ENCODE measurements at regions of chr9 and their contacts with region 1.

Region 1: GRCh38 chr9:131334629-131335367 is 45.3 kb downstream of the PLPP7 start:
- DNase-seq: no peak
- H3K4me3 ChIP-seq: no peak overlapping the region
- H3K27ac ChIP-seq: no peak overlapping the region
- H3K4me1 ChIP-seq: no peaks in the 10 kb centered on the region
- CTCF ChIP-seq: no peak

Region 2: DNA sequence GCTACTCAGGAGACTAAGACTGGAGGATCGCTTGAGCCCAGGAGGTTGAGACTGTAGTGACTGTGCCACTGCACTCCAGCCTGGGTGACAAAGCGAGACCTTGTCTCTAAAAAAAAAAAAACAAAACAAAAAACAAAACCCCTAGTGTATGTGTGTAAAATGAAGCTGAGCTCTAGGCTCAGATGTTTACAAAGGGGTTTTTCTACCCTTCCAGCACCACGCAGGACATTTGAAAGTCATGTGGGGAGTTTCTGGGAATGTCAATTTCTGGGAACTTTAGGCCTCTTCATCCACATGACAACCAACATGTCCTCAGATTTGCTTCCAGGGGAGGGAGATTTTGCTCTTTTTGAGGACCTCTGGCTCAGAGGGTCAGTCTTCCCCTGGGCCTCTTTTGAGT is 280.9 kb before region 1 on chr9:
- CTCF ChIA-PET with region 1: interaction called, 6 read pairs
- POLR2A ChIA-PET with region 1: no interaction called
- intact Hi-C with region 1: loop called (anchors 1 kb)
- DNase-seq: no peak
- H3K4me3 ChIP-seq: no peak overlapping the region
- H3K27ac ChIP-seq: no peak overlapping the region
- H3K4me1 ChIP-seq: no peaks in the 10 kb centered on the region
- CTCF ChIP-seq: no peak

Region 3: GRCh38 chr9:131178382-131178781 is 156.4 kb before region 1 on chr9:
- CTCF ChIA-PET with region 1: interaction called, 4 read pairs
- POLR2A ChIA-PET with region 1: no interaction called
- intact Hi-C with region 1: loop called (anchors 1 kb)
- DNase-seq: peak; percentile 80
- H3K4me3 ChIP-seq: no peak overlapping the region
- H3K27ac ChIP-seq: no peak overlapping the region
- H3K4me1 ChIP-seq: peaks cover 33% of the 10 kb centered on the region
- CTCF ChIP-seq: peak; percentile 96

Region 4: GRCh38 chr9:131191857-131192256 is 142.9 kb before region 1 on chr9:
- CTCF ChIA-PET with region 1: no interaction called
- POLR2A ChIA-PET with region 1: interaction called, 10 read pairs
- intact Hi-C with region 1: no loop called
- DNase-seq: no peak
- H3K4me3 ChIP-seq: no peak overlapping the region
- H3K27ac ChIP-seq: no peak overlapping the region
- H3K4me1 ChIP-seq: no peaks in the 10 kb centered on the region
- CTCF ChIP-seq: no peak

Region 5: GRCh38 chr9:131240047-131240921 is 94.5 kb before region 1 on chr9:
- CTCF ChIA-PET with region 1: no interaction called
- POLR2A ChIA-PET with region 1: no interaction called
- intact Hi-C with region 1: loop called (anchors 5 kb)
- DNase-seq: no peak
- H3K4me3 ChIP-seq: no peak overlapping the region
- H3K27ac ChIP-seq: no peak overlapping the region
- H3K4me1 ChIP-seq: peaks cover 9% of the 10 kb centered on the region
- CTCF ChIP-seq: no peak

Region 6: DNA sequence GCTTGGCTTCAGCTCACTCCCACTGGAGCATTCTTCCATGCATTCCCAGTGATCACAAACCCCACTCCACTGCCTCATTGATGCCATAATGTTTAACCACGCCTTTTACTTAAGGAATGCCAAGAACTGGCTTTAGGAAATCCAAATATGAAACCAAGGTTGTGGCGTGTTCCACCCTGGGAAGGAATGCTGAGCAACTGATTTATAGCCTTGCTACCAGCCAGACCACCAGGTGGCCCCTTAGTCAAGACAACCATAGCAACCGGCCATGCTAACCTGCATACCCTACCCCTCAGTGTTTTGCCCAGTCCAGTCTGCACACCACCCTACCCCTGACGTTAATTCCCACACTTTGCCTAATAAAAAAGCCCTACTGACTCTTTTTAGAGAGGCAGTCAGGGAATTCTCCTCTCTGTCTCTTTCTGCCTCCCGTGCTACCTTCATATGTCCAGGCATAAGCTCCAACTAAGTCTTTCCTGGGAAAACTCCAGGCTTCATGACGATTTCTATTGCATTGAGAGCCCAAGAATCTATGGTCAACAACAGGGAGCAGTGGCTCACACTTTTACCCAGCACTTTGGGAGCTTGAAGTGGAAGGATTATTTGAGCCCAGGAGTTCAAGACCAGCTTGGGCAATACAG is 32.1 kb after region 1 on chr9:
- CTCF ChIA-PET with region 1: no interaction called
- POLR2A ChIA-PET with region 1: no interaction called
- intact Hi-C with region 1: no loop called
- DNase-seq: peak; percentile 68
- H3K4me3 ChIP-seq: no peak overlapping the region
- H3K27ac ChIP-seq: no peak overlapping the region
- H3K4me1 ChIP-seq: peaks cover 3% of the 10 kb centered on the region
- CTCF ChIP-seq: peak; percentile 77